ENCODE measurements at regions of chr19 and their contacts with region 1.

Region 1: DNA sequence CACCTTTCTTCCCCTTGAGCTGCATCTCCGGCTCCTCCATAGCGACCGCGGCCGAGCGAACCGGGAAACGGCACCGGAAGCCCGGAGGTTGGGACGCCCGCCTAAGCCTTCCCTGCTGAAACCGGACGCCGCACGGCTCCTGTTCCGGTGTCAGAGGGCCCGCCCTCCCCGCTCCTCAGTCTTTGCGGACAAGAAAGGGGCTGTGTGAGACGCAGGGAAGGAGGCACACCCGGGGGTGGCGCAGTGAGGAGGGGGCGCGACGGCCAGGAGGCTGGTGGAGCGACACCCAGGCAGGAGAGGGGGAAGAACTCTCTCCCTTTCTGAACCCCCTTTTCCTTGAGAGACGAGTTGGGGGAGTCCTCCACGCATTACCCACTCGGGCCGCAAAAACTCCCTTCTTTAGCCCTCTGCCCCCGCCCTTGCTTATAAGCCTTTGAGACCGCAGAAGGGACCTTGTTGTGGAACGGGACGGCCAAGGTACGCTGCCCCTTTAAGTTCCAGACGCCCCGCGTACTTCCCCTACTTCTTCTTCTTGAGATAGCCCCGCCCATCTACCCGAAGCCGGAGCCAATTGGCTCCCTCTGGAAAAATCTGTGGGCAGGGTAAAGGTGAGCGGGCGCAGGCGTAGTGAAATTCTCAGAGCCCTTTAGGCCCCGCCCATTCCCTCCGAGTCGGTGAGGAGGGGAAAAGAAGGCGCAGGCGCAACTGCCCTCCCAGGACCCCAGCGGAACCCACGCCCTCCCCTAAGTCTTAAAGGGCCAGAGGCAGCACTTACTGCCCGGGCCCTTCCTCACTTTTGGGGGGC is at the starts of genes BORCS8 and RFXANK:
- DNase-seq: peak; percentile 97 to 100 (median 98)
- ATAC-seq: peak; percentile 91
- H3K4me3 ChIP-seq: peak within 1 kb of the TSS; percentile 100
- H3K4me3 Mint-ChIP-seq: peak within 1 kb of the TSS; percentile 96
- H3K27ac ChIP-seq: peak within 1 kb of the TSS; percentile 98 to 100
- H3K27ac Mint-ChIP-seq: peak within 1 kb of the TSS; percentile 98
- H3K4me1 ChIP-seq: peaks cover 36% of the 10 kb centered on the region
- H3K4me1 Mint-ChIP-seq: peaks cover 52% of the 10 kb centered on the region
- H3K27me3 ChIP-seq: no peaks in the 10 kb centered on the region
- H3K27me3 Mint-ChIP-seq: no peaks in the 10 kb centered on the region
- CTCF ChIP-seq: no peak
- total RNA-seq, gene BORCS8: 6.6 to 13.6 TPM
- total RNA-seq, gene RFXANK: 33.4 to 38.8 TPM

Region 2: DNA sequence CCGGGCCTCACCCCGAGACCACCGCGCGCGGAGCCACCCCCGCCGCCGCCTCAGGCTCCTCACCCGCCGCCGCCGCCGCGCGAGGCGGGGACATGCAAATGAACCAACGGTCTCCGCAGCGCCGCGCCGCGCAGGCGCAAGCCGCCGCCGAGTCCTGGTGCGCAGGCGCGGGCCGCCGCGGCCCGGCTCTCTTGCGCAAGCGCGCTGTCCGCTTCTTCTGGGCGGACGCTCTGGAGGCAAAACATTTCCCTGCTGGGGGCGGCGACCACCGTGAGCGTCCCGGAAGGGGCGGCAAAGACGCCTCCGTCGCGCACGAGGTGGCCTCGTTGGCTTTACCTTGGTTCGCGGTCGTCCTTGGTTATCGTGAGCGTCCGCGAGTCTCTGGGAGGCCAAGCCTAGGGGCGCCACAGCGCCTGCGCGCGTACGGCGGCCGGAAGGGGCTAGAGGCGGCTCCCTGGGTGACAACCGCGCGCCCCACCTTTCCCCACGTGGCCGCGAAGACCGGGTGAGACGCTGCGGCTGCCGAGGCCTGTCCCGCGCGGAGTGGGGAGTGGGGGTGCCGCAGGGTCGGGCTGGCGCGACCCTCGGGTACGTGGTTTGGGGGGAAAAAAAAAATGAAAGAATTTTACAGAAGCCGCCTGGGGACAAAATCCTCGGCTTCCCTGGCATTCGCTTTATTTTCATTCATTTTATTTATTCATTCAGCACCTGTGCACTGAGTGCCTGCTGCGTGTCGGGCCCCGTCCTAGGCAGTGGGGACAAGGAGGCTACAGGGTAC is 158.7 kb before region 1 on chr19 and contains the starts of genes ARMC6 and SUGP2:
- CTCF ChIA-PET with region 1: no interaction called
- POLR2A ChIA-PET with region 1: no interaction called
- intact Hi-C with region 1: loop called (anchors 1 kb)
- DNase-seq: peak; percentile 79 to 95 (median 89)
- ATAC-seq: peak; percentile 68
- H3K4me3 ChIP-seq: peak within 1 kb of the TSS; percentile 71 to 81
- H3K4me3 Mint-ChIP-seq: peak within 1 kb of the TSS; percentile 97
- H3K27ac ChIP-seq: peak within 1 kb of the TSS; percentile 65 to 85
- H3K27ac Mint-ChIP-seq: peak within 1 kb of the TSS; percentile 97
- H3K4me1 ChIP-seq: peaks cover 18% of the 10 kb centered on the region
- H3K4me1 Mint-ChIP-seq: peaks cover 33% of the 10 kb centered on the region
- H3K27me3 ChIP-seq: no peaks in the 10 kb centered on the region
- H3K27me3 Mint-ChIP-seq: no peaks in the 10 kb centered on the region
- CTCF ChIP-seq: no peak
- total RNA-seq, gene ARMC6: 4.6 to 5.3 TPM
- total RNA-seq, gene SUGP2: 85.4 to 90.8 TPM

Region 3: DNA sequence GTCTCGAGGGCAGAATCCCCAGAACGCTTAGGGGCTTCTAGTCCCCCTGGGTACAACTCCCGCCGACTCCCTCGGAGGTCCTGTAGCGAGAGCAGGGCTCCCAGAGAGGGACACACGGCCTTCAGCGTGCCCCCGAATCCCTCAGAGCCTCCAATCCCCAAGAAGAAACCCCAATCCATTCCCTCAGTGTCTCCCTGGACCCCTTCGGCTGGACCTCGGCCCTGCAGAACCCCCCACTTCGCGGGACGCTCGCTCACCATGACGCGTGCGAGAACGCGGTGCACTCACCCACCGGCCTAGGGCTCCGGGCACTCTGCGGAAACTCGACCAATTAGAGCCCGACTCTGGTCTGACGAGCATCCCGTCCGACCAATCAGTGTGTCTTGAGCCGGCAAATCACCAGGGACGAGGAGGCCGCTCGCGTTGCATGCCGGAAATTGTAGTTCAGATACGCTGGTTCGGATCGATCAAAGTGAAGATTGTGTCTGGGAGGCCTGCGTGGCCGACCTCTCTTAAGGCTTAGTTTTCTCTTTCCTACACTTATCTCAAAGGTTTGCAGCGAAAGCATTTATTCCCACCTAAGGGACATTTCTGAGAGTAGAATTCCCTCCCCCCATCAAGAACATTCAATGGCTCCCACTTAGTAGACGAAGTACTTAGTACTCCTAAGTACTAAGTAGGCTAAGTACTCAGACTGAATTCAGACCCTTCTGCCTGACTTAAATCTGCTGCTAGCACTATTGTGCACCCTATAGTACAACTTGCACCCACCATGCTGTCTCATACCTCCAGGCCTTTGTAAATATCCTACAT is 53.9 kb before region 1 on chr19 and contains the start of gene TMEM161A:
- CTCF ChIA-PET with region 1: interaction called, 3 read pairs
- POLR2A ChIA-PET with region 1: interaction called, 3 read pairs
- intact Hi-C with region 1: loop called (anchors 1 kb)
- DNase-seq: peak; percentile 88 to 98 (median 96)
- ATAC-seq: peak; percentile 99
- H3K4me3 ChIP-seq: peak within 1 kb of the TSS; percentile 78 to 95
- H3K4me3 Mint-ChIP-seq: peak within 1 kb of the TSS; percentile 95
- H3K27ac ChIP-seq: peak within 1 kb of the TSS; percentile 64 to 77
- H3K27ac Mint-ChIP-seq: peak within 1 kb of the TSS; percentile 92
- H3K4me1 ChIP-seq: peaks cover 14% of the 10 kb centered on the region
- H3K4me1 Mint-ChIP-seq: peaks cover 34% of the 10 kb centered on the region
- H3K27me3 ChIP-seq: no peaks in the 10 kb centered on the region
- H3K27me3 Mint-ChIP-seq: no peaks in the 10 kb centered on the region
- CTCF ChIP-seq: no peak
- total RNA-seq, gene TMEM161A: 9.4 to 9.9 TPM

Region 4: GRCh38 chr19:19320362-19321142 is 128.3 kb after region 1 on chr19 and contains the starts of genes MAU2 and SUGP1:
- CTCF ChIA-PET with region 1: no interaction called
- POLR2A ChIA-PET with region 1: no interaction called
- intact Hi-C with region 1: loop called (anchors 1 to 2 kb)
- DNase-seq: peak; percentile 81 to 95 (median 88)
- ATAC-seq: peak; percentile 90
- H3K4me3 ChIP-seq: peak within 1 kb of the TSS; percentile 88 to 94
- H3K4me3 Mint-ChIP-seq: peak within 1 kb of the TSS; percentile 99
- H3K27ac ChIP-seq: peak within 1 kb of the TSS; percentile 88 to 97
- H3K27ac Mint-ChIP-seq: peak within 1 kb of the TSS; percentile 99
- H3K4me1 ChIP-seq: peaks cover 35% of the 10 kb centered on the region
- H3K4me1 Mint-ChIP-seq: peaks cover 40% of the 10 kb centered on the region
- H3K27me3 ChIP-seq: no peaks in the 10 kb centered on the region
- H3K27me3 Mint-ChIP-seq: no peaks in the 10 kb centered on the region
- CTCF ChIP-seq: no peak
- total RNA-seq, gene MAU2: 137 to 139 TPM
- total RNA-seq, gene SUGP1: 60.9 to 68.2 TPM

Region 5: GRCh38 chr19:19385108-19385899 is 193.0 kb after region 1 on chr19:
- CTCF ChIA-PET with region 1: no interaction called
- POLR2A ChIA-PET with region 1: no interaction called
- intact Hi-C with region 1: loop called in 1 of 2 experiments (anchors 1 kb)
- DNase-seq: peak; percentile 99 to 100 (median 99)
- ATAC-seq: peak; percentile 86
- H3K4me3 ChIP-seq: peak overlapping the region; percentile 73 to 84
- H3K4me3 Mint-ChIP-seq: peak overlapping the region; percentile 93
- H3K27ac ChIP-seq: peak overlapping the region; percentile 71 to 88
- H3K27ac Mint-ChIP-seq: peak overlapping the region; percentile 92
- H3K4me1 ChIP-seq: peaks cover 45% of the 10 kb centered on the region
- H3K4me1 Mint-ChIP-seq: peaks cover 39% of the 10 kb centered on the region
- H3K27me3 ChIP-seq: no peaks in the 10 kb centered on the region
- H3K27me3 Mint-ChIP-seq: no peaks in the 10 kb centered on the region
- CTCF ChIP-seq: no peak

Measured in CD8-positive, alpha-beta T cell (primary cell).